T-cell (primary cell): ENCODE measurements at regions of chr18 and their contacts with region 1.

Region 1: GRCh38 chr18:9380621-9381399 is 46.2 kb downstream of the TWSG1 start:
- DNase-seq: no peak
- ATAC-seq: no peak
- H3K4me3 ChIP-seq: no peak overlapping the region
- H3K4me3 Mint-ChIP-seq: no peak overlapping the region
- H3K27ac ChIP-seq: no peak overlapping the region
- H3K27ac Mint-ChIP-seq: no peak overlapping the region
- H3K4me1 ChIP-seq: no peaks in the 10 kb centered on the region
- H3K4me1 Mint-ChIP-seq: no peaks in the 10 kb centered on the region
- H3K27me3 ChIP-seq: no peaks in the 10 kb centered on the region
- H3K27me3 Mint-ChIP-seq: no peaks in the 10 kb centered on the region

Region 2: DNA sequence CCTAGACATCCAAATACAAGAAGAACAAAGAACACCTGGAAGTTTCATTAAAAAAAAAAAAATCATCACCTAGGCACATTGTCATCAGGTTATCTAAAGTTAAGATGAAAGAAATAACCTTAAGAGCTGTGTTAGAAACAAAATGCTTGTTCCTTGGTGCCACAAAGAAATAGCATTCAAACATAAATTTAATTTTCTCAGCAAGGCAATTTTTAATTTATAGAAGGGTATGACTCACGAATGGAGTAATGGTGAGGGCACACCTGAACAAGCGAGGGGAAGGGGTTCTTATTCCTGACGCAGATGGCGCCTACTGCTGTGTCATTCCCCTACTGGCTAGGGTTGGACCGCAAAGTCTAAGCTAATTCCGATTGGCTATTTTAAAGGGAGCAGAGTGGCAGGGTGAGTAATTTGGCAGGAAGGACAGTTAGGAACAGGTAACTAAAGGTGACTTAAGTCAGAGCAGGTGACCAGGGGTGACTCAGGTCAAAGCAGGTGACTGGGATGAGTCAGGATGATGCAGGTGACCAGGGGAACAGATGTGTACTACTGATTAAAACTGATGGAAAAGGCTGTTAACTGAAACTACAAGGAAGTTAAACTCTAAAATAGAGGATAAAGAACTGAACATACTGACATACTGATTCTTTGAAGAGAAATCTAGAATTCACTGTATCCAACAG is 76.3 kb before region 1 on chr18:
- CTCF ChIA-PET with region 1: no interaction called
- POLR2A ChIA-PET with region 1: no interaction called
- DNase-seq: no peak
- ATAC-seq: no peak
- H3K4me3 ChIP-seq: no peak overlapping the region
- H3K4me3 Mint-ChIP-seq: no peak overlapping the region
- H3K27ac ChIP-seq: no peak overlapping the region
- H3K27ac Mint-ChIP-seq: no peak overlapping the region
- H3K4me1 ChIP-seq: no peaks in the 10 kb centered on the region
- H3K4me1 Mint-ChIP-seq: no peaks in the 10 kb centered on the region
- H3K27me3 ChIP-seq: peaks cover 0 to 2% of the 10 kb centered on the region in 2 experiments
- H3K27me3 Mint-ChIP-seq: peaks cover 0 to 10% of the 10 kb centered on the region in 2 donors

Region 3: DNA sequence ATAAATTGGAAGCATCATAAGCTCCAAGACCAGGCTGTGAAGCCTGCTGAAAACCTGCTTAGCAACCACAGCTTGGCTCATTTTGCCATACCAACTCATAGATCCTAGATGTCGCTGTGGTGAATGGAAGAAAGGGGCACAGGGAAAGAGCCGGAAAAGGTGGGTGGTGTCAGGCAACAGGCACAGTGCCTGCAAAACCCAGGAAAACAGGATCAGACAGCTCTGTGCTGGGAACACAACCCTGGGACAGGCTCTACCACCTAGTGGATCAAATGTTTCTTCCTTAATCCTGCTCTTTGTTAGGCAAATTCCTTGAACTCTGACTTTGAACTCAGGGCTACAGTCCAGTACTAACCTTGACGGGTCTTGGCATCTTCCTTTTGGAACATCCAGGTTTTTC is 14.6 kb before region 1 on chr18:
- CTCF ChIA-PET with region 1: no interaction called
- POLR2A ChIA-PET with region 1: interaction called in 1 of 2 experiments, 13 read pairs
- DNase-seq: no peak
- ATAC-seq: no peak
- H3K4me3 ChIP-seq: no peak overlapping the region
- H3K4me3 Mint-ChIP-seq: no peak overlapping the region
- H3K27ac ChIP-seq: no peak overlapping the region
- H3K27ac Mint-ChIP-seq: no peak overlapping the region
- H3K4me1 ChIP-seq: no peaks in the 10 kb centered on the region
- H3K4me1 Mint-ChIP-seq: no peaks in the 10 kb centered on the region
- H3K27me3 ChIP-seq: no peaks in the 10 kb centered on the region
- H3K27me3 Mint-ChIP-seq: no peaks in the 10 kb centered on the region

Region 4: GRCh38 chr18:9404565-9405060 is 23.8 kb after region 1 on chr18:
- CTCF ChIA-PET with region 1: no interaction called
- POLR2A ChIA-PET with region 1: no interaction called
- DNase-seq: peak in 20 of 35 experiments; percentile 2 to 30 (median 12)
- ATAC-seq: peak; percentile 46 to 85 (median 67)
- H3K4me3 ChIP-seq: peak overlapping the region; percentile 29 to 58
- H3K4me3 Mint-ChIP-seq: peak overlapping the region; percentile 49 to 66 (median 54)
- H3K27ac ChIP-seq: no peak overlapping the region
- H3K27ac Mint-ChIP-seq: no peak overlapping the region
- H3K4me1 ChIP-seq: peaks cover 0 to 8% of the 10 kb centered on the region in 2 experiments
- H3K4me1 Mint-ChIP-seq: peaks cover 5 to 12% (median 5%) of the 10 kb centered on the region in 3 donors
- H3K27me3 ChIP-seq: peaks cover 0 to 16% of the 10 kb centered on the region in 2 experiments
- H3K27me3 Mint-ChIP-seq: peaks cover 0 to 9% of the 10 kb centered on the region in 2 donors